ENCODE measurements at regions of chr14 and their contacts with region 1.

Region 1: GRCh38 chr14:71932220-71932981 is at the start of gene RGS6:
- DNase-seq: peak; percentile 10
- H3K4me3 Mint-ChIP-seq: peak within 1 kb of the TSS; percentile 74
- H3K27ac Mint-ChIP-seq: peak within 1 kb of the TSS; percentile 80
- H3K4me1 Mint-ChIP-seq: peaks cover 15% of the 10 kb centered on the region
- H3K27me3 Mint-ChIP-seq: peaks cover 55% of the 10 kb centered on the region
- total RNA-seq, gene RGS6: 2.8 and 3.7 TPM in 2 replicates

Region 2: DNA sequence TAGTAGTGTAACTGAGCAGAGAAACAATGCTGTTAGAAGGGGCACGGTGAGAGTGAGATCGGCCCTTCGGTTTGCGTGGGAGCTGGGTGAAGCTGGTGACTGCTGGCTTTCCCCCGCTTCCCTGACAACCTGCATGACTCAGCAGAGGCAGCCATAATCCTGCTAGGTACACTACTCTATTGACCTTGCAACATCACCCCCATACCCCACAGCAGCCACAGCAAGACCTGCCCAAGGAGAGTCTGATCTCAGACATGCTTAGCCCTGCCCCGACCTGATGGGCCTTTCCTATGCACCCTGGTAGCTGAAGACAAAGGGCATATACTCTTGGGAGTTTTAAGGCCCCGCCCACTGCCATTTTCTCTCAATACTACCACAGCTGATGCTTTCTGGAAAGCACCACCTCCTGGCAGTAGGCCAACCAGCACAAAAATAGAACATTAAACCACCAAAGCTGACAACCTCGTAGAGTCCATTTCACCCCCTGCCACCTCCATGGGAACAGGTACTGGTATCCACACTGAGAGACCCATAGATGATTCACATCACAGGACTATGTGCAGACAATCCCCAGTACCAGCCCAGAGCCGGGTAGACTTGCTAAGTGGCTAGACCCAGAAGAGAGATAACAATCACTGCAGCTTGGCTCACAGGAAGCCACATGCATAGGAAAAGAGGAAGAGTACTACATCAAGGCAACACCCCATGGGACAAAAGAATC is 76.0 kb before region 1 on chr14:
- intact Hi-C with region 1: no loop called
- DNase-seq: no peak
- H3K4me3 Mint-ChIP-seq: no peak overlapping the region
- H3K27ac Mint-ChIP-seq: no peak overlapping the region
- H3K4me1 Mint-ChIP-seq: peaks cover 11% of the 10 kb centered on the region
- H3K27me3 Mint-ChIP-seq: peaks cover 38% of the 10 kb centered on the region

Region 3: DNA sequence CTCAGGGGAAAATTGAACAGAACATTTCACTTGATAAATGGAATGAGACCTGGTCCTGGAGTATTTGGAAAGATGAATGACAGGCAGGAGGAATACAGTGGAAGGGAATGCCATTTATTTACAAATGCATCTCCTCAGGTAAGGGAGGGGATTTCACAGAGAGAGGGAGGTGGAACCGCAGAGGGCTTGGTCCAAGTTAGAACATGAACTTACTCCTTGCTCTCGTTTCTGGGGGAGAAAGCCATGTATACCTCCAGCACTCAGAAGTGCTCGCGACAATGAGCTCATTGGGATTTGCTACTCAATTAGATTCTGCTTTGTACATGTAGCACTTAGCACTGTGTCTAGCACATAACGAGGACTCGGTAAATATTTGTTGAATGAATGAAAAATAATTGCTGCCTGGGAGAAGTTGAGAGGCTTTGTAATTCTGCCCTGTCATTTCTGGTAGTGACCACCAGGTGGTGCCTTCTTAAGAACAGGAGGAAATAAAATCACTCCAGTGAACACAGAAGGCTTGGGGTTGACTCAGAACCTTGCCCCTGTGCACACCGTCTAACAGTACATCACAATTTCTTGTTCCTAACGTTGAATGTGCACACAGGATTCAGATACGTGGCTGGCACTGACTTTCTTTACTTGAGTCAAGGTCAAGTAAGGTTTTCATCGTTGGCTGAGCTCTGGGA is 91.5 kb after region 1 on chr14:
- intact Hi-C with region 1: loop called (anchors 5 kb)
- DNase-seq: peak; percentile 40
- H3K4me3 Mint-ChIP-seq: no peak overlapping the region
- H3K27ac Mint-ChIP-seq: no peak overlapping the region
- H3K4me1 Mint-ChIP-seq: peaks cover 10% of the 10 kb centered on the region
- H3K27me3 Mint-ChIP-seq: peaks cover 39% of the 10 kb centered on the region

Region 4: GRCh38 chr14:72420725-72421474 is 488.5 kb after region 1 on chr14:
- intact Hi-C with region 1: loop called (anchors 5 kb)
- DNase-seq: peak; percentile 71
- H3K4me3 Mint-ChIP-seq: no peak overlapping the region
- H3K27ac Mint-ChIP-seq: no peak overlapping the region
- H3K4me1 Mint-ChIP-seq: peaks cover 16% of the 10 kb centered on the region
- H3K27me3 Mint-ChIP-seq: peaks cover 27% of the 10 kb centered on the region